Spleen (tissue), 13 donors: ENCODE measurements at regions of chr20 and their contacts with region 1.

Region 1: DNA sequence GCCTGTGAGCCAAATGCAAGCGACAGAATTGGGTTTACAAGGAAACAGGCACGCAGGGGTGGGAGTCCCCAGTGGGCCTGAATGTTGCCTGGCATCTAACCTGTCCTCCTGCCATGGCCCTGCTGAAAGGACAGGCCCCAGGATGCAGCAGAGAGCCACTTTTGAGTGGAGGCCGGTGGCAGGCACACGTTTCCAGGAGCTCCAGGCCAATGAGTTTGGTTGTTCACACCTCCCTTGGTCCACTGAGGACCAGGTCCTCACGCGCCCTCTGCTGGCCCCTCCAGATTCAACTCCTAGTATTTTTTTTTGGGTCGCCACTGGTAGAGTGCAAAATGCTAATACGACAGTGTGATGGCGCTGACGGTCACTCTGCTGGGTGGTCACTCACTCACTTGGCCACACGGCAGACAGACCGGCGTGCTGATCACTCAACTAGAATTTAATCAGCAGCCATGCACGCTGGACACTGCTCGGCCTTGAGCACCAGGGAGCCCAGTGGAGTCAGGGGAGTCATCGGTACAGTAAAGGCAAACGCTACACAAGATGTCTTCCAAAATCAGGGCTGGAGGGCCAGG is 81.7 kb upstream of the NFATC2 start:
- DNase-seq: peak; percentile 87
- H3K4me3 ChIP-seq: no peak overlapping the region
- H3K27ac ChIP-seq: no peak overlapping the region
- H3K4me1 ChIP-seq: peaks cover 0 to 7% (median 3%) of the 10 kb centered on the region in 6 donors
- H3K27me3 ChIP-seq: peaks cover 0 to 3% (median 0%) of the 10 kb centered on the region in 7 donors
- CTCF ChIP-seq: peak; percentile 16 to 71 (median 54)
- POLR2A ChIP-seq: no peak

Region 2: DNA sequence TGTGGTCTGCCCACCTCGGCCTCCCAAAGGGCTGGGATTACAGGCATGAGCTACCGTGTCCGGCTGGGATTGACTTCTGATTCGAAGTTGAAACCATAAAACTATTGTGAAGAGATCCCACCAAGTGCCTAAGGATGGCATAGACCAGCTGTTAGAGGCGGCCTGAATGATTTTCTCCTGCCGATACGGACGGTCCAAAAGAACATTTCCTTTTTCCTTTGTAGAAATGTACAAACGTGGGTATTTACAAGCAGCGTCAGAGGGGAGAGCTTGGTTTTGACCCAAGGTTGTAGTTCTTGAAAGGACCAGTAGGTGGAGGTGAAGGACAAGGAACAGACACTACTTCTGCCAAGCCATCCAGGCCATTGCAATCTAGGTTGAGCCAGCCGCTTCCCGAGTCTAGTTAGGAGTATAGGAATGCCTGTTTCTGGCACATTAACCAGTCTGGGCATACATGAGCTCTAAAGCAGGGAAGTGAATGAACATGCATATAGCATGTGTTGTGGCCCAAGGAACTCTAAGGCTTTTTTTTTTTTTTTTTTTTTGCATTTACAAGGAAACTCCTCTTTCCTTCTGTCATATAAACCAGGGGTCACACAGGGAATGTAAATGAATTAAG is 636.5 kb before region 1 on chr20:
- intact Hi-C with region 1: loop called (anchors 10 kb)
- DNase-seq: no peak
- H3K4me3 ChIP-seq: no peak overlapping the region
- H3K27ac ChIP-seq: peak overlapping the region in 1 of 8 donors; percentile 42
- H3K4me1 ChIP-seq: peaks cover 0 to 21% (median 2%) of the 10 kb centered on the region in 6 donors
- H3K27me3 ChIP-seq: peaks cover 0 to 48% (median 5%) of the 10 kb centered on the region in 7 donors
- CTCF ChIP-seq: peak; percentile 75 to 95 (median 90)
- POLR2A ChIP-seq: no peak

Region 3: DNA sequence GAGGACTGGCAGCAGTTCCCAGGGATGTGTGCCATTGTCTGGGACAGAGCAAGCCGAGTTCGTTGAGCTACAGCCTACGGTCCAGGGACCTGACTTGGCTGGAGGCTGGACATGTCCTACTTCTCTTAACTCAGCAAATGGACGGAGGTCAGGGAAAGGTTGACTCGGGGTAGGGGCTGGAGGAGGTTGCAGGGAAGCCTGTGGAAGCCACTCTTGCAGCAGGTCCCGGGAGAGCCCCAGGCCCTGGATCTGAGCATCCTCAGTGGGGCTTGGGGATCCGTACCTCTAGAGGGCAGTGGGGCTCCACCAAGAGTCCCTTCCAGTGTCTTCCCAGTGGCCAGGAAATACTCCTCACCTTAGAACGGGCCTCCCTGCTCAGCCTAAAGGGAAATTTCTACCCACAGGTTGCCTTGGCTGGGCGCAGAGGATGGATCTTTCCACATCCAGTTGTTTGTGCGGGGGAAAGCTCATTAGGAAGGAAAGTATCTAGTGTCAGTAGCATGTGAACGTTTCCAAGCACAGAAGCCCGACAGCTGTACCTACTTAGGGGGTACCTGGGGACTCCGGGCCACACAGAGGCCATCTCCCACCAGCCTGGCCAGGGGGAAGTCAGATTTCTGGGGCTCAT is 252.0 kb before region 1 on chr20:
- intact Hi-C with region 1: loop called (anchors 10 kb)
- DNase-seq: peak; percentile 84
- H3K4me3 ChIP-seq: no peak overlapping the region
- H3K27ac ChIP-seq: no peak overlapping the region
- H3K4me1 ChIP-seq: peaks cover 0 to 27% (median 10%) of the 10 kb centered on the region in 6 donors
- H3K27me3 ChIP-seq: no peaks in the 10 kb centered on the region
- CTCF ChIP-seq: peak; percentile 43 to 85 (median 80)
- POLR2A ChIP-seq: no peak

Region 4: GRCh38 chr20:51388227-51388626 is 236.0 kb before region 1 on chr20:
- intact Hi-C with region 1: no loop called
- DNase-seq: no peak
- H3K4me3 ChIP-seq: no peak overlapping the region
- H3K27ac ChIP-seq: peak overlapping the region in 3 of 8 donors; percentile 32 to 74 (median 60)
- H3K4me1 ChIP-seq: peaks cover 16 to 84% (median 48%) of the 10 kb centered on the region in 6 donors
- H3K27me3 ChIP-seq: no peaks in the 10 kb centered on the region
- CTCF ChIP-seq: no peak
- POLR2A ChIP-seq: no peak